ENCODE measurements at regions of chr1 and their contacts with region 1.

Region 1: DNA sequence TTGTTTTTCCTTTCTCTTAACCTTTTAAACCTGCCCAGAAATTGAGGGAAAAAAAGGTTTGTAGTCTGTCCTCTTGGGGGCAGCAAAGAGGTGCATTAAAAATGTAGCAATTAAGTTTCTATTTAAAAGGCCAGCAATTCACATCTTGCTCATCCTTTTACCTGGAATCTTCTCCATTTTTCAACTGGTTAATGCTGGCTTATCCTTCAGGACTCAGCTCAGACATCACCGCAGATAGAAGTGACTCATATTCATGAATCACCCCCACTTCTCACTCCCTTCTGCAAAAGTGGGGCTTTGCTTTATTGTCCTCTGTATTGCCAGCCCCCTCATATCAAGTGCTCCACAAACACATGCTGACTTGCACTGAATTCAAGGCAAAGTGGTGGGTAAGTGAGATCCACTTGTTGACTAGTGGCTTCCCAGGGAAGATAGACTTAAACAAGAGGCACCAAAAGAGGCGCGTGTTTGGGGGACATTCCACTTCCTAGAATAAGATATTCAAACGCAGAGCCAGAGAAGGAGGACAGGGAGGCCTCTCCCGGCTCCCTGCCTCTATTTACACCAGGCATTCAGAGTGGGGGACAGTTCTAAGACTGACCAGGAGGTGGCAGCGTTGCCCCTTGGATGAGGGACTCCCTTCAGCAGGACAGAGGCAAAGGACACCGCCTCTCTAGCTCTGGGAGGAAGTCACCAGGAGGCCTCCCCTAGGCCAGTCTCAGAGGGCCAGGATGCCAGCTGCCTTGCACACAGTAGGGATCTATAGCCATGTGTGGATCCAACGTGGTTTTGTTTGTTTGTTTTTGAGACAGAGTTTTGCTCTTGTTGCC is 23.2 kb upstream of the ZNF648 start:
- DNase-seq: peak; percentile 67
- ATAC-seq: peak; percentile 96
- H3K4me3 ChIP-seq: no peak overlapping the region
- H3K27ac ChIP-seq: no peak overlapping the region
- H3K4me1 ChIP-seq: peaks cover 0 to 6% of the 10 kb centered on the region in 2 experiments; a peak in 1 of 4 replicates
- H3K27me3 ChIP-seq: no peaks in the 10 kb centered on the region
- CTCF ChIP-seq: peak; percentile 78 to 92 (median 83)
- POLR2A ChIP-seq: no peak
- RAD21 ChIP-seq: peak; percentile 98

Region 2: DNA sequence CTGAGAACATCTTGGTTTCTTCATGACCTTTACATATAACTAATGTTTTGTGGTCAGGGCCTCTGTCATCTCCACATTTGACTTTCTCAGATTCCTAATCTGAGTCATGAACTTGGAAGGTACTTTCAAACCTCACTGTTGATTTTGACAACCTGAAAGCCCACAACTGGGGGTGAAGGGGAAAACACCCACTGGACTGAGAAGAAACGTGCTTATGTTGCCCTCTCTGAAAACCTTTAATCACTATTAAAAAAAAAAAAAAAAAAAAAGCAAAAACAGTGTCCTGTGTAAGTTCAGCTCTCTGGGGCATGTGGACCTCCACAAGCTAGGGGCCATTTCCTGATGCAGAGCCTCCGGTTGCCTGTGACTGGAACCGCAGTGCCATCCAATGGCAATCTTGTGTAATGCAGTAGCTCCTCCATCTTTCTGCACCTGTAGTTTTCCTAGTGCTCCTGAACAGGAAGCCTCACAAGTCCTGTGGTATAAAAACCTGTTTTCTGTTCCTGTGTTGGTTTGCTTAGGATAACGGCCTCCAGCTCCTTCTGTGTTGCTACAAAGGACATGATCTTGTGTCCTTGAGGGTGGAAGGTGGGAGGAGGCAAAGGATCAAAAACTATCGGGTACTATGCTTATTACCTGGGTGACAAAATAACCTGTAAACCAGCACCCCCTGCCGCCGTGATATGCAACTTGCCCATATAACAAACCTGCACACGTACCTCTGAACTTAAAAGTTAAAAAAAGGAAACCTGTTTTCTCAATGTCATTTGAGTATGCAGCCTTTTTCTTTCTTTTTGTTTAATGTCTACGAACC is 147.7 kb before region 1 on chr1:
- CTCF ChIA-PET with region 1: interaction called, 16 read pairs
- POLR2A ChIA-PET with region 1: no interaction called
- RAD21 ChIA-PET with region 1: interaction called in 1 of 2 experiments, 3 read pairs
- intact Hi-C with region 1: no loop called
- DNase-seq: peak; percentile 77
- ATAC-seq: peak; percentile 97
- H3K4me3 ChIP-seq: no peak overlapping the region; a peak in 1 of 4 replicates
- H3K27ac ChIP-seq: no peak overlapping the region
- H3K4me1 ChIP-seq: peaks cover 3% of the 10 kb centered on the region in 2 experiments; a peak in 1 of 4 replicates
- H3K27me3 ChIP-seq: peaks cover 12% of the 10 kb centered on the region
- CTCF ChIP-seq: peak; percentile 60 to 97 (median 81)
- POLR2A ChIP-seq: no peak
- RAD21 ChIP-seq: peak; percentile 81

Region 3: DNA sequence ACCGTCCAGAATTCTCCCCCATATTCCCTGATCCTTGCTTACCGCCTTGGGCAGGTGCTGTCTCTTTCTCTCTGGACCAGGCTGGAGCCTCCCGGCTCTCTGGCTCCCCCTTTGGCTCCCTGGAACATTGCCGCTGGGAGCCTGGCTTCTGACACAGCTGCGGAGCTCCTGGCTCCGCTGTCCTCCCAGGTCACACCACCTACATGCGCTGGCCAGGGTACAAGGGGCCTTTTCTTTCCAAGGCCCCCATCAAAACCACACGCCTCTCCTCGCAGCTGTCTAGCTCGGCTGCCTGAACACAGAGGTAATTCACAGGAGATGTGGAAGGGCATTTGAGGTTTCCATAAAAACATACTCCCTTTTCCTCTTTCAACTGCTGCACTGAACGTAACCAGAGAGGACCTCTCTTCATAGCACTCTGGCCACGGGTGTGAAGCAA is 15.7 kb before region 1 on chr1:
- CTCF ChIA-PET with region 1: interaction called, 21 read pairs
- POLR2A ChIA-PET with region 1: no interaction called
- RAD21 ChIA-PET with region 1: interaction called in 1 of 2 experiments, 3 read pairs
- intact Hi-C with region 1: no loop called
- DNase-seq: peak; percentile 18
- ATAC-seq: peak; percentile 98
- H3K4me3 ChIP-seq: no peak overlapping the region
- H3K27ac ChIP-seq: no peak overlapping the region
- H3K4me1 ChIP-seq: no peaks in the 10 kb centered on the region; a peak in 2 of 4 replicates
- H3K27me3 ChIP-seq: no peaks in the 10 kb centered on the region
- CTCF ChIP-seq: peak in 2 of 3 experiments; percentile 52 to 72; a peak in 4 of 6 replicates
- POLR2A ChIP-seq: no peak
- RAD21 ChIP-seq: no peak

Region 4: GRCh38 chr1:182215764-182216163 is 131.1 kb after region 1 on chr1:
- CTCF ChIA-PET with region 1: no interaction called
- POLR2A ChIA-PET with region 1: no interaction called
- RAD21 ChIA-PET with region 1: no interaction called
- intact Hi-C with region 1: no loop called
- DNase-seq: no peak
- ATAC-seq: no peak
- H3K4me3 ChIP-seq: no peak overlapping the region
- H3K27ac ChIP-seq: no peak overlapping the region
- H3K4me1 ChIP-seq: peaks cover 0 to 27% of the 10 kb centered on the region in 2 experiments; a peak in 3 of 4 replicates
- H3K27me3 ChIP-seq: no peaks in the 10 kb centered on the region
- CTCF ChIP-seq: no peak
- POLR2A ChIP-seq: no peak
- RAD21 ChIP-seq: no peak

Region 5: GRCh38 chr1:182391362-182392044 is 306.8 kb after region 1 on chr1 and contains the start of gene GLUL:
- CTCF ChIA-PET with region 1: interaction called, 31 read pairs
- POLR2A ChIA-PET with region 1: interaction called, 11 read pairs
- RAD21 ChIA-PET with region 1: interaction called, 6 to 8 read pairs
- intact Hi-C with region 1: loop called (anchors 1 kb)
- DNase-seq: peak; percentile 68
- ATAC-seq: peak; percentile 93
- H3K4me3 ChIP-seq: peak within 1 kb of the TSS; percentile 71 to 85
- H3K27ac ChIP-seq: peak within 1 kb of the TSS; percentile 94
- H3K4me1 ChIP-seq: peaks cover 13 to 18% of the 10 kb centered on the region in 2 experiments
- H3K27me3 ChIP-seq: no peaks in the 10 kb centered on the region
- CTCF ChIP-seq: no peak
- POLR2A ChIP-seq: peak; percentile 97
- RAD21 ChIP-seq: no peak; the same call in 1 of the 2 replicates
- total RNA-seq, gene GLUL: 165 TPM

Region 6: DNA sequence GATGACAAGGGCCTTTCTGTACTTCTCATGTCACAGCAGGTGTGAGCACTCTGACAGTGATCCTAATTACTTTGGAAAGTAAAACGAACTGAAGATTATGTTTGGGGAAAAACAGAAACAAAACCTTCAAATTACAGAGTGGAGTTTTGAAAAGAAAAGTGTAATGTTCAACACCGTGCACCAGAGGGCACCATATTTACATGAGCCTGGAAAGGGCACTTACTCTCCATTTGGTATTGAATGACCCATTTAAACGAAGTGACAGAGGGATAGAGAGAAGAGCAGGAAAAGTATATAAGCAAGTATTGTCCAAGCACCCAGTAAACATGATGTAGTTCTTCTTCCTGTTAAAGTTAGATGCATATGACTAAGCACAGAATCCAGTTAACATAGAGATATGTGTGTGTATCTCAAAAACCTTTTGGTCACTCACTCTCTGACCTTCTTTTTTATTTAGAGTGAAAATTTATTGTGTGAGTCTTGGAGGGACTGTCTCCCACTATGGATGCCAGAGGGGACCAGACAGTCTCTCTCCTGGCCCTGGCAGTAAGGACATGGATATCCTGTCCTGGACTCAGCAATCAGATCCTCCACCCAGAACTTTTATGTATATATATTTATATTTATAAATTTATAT is 361.4 kb after region 1 on chr1:
- CTCF ChIA-PET with region 1: interaction called, 4 read pairs
- POLR2A ChIA-PET with region 1: no interaction called
- RAD21 ChIA-PET with region 1: no interaction called
- intact Hi-C with region 1: loop called (anchors 2 kb)
- DNase-seq: peak; percentile 47
- ATAC-seq: peak; percentile 91
- H3K4me3 ChIP-seq: no peak overlapping the region
- H3K27ac ChIP-seq: no peak overlapping the region
- H3K4me1 ChIP-seq: no peaks in the 10 kb centered on the region
- H3K27me3 ChIP-seq: no peaks in the 10 kb centered on the region
- CTCF ChIP-seq: peak; percentile 53 to 75 (median 72)
- POLR2A ChIP-seq: no peak
- RAD21 ChIP-seq: peak; percentile 86

Region 7: DNA sequence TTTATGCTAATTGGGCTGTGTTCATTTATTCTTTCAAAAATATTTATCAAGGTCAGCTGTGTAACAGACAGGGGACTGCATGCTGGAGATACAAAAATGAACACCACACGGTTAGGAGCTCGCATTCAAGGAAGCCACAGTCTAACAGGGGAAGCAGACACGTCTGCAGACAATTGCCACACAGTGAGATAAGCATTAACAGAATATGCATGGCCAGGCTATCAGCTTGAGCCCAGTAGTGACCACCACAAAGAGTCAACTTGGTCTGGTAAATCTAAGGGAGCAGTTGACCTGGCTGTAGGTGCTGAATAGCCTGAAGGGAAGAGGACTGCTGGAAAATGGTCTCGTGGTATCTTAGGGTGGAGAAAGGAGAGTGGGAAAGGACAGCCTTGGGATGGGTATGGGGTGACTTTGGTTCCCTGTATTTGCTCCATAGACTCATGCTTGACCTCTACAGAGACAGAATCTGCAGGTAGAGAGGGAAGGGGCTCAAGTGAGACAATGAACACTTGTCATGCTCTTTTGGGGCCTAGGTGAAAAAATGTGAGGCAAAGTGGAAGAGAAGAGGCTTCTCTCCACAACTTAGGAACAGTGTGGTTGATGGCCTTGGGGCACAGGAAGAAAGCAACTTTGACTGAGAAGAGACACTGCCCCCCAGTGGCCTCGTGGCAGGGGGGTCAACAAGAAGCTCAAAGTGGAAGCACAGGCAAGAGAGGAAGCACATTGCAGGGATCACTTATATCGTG is 697.3 kb after region 1 on chr1:
- CTCF ChIA-PET with region 1: interaction called, 5 read pairs
- POLR2A ChIA-PET with region 1: no interaction called
- RAD21 ChIA-PET with region 1: no interaction called
- intact Hi-C with region 1: loop called (anchors 1 kb)
- DNase-seq: peak; percentile 48
- ATAC-seq: peak; percentile 81
- H3K4me3 ChIP-seq: no peak overlapping the region
- H3K27ac ChIP-seq: no peak overlapping the region
- H3K4me1 ChIP-seq: no peaks in the 10 kb centered on the region
- H3K27me3 ChIP-seq: no peaks in the 10 kb centered on the region
- CTCF ChIP-seq: peak; percentile 78 to 82 (median 80)
- POLR2A ChIP-seq: no peak
- RAD21 ChIP-seq: peak; percentile 90